Esophagus muscularis mucosa (tissue), 4 donors: ENCODE measurements at regions of chr7 and their contacts with region 1.

Region 1: GRCh38 chr7:66844552-66845378 is 76.3 kb upstream of the TMEM248 start:
- DNase-seq: peak; percentile 99
- H3K4me3 ChIP-seq: peak overlapping the region; percentile 64 to 77 (median 68)
- H3K27ac ChIP-seq: peak overlapping the region; percentile 85 to 91 (median 90)
- H3K4me1 ChIP-seq: peaks cover 12 to 23% (median 18%) of the 10 kb centered on the region in 4 donors
- H3K27me3 ChIP-seq: no peaks in the 10 kb centered on the region
- CTCF ChIP-seq: peak in 1 of 3 experiments; percentile 41
- EP300 ChIP-seq: peak; percentile 3
- POLR2A ChIP-seq: peak; percentile 71

Region 2: DNA sequence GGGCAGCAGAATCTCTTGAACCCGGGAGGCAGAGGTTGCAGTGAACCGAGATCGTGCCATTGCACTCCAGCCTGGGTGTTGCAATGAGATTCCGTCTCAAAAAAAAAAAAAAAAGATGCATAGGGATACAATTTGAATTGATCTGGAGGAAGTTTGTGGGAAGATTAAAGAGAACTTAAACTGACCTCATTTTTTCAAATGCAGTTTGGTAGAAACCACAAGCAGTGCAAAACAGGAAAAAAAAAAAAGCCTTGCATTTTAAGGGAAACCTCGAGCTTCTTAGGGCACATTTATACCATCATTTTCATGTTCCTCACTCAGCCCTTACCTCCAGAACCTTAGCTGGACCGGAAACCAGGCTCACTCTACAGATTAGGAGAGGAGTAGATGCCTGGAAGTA is 213.3 kb before region 1 on chr7:
- intact Hi-C with region 1: no loop called
- DNase-seq: no peak
- H3K4me3 ChIP-seq: no peak overlapping the region
- H3K27ac ChIP-seq: peak overlapping the region in 1 of 4 donors; percentile 1
- H3K4me1 ChIP-seq: peaks cover 11 to 54% (median 49%) of the 10 kb centered on the region in 4 donors
- H3K27me3 ChIP-seq: no peaks in the 10 kb centered on the region
- CTCF ChIP-seq: no peak
- EP300 ChIP-seq: no peak
- POLR2A ChIP-seq: no peak

Region 3: GRCh38 chr7:66920769-66921395 is 76.1 kb after region 1 on chr7 and contains the start of gene TMEM248:
- intact Hi-C with region 1: loop called (anchors 10 kb)
- DNase-seq: peak; percentile 96
- H3K4me3 ChIP-seq: peak within 1 kb of the TSS; percentile 88 to 98 (median 96)
- H3K27ac ChIP-seq: peak within 1 kb of the TSS; percentile 76 to 90 (median 84)
- H3K4me1 ChIP-seq: peaks cover 30 to 52% (median 45%) of the 10 kb centered on the region in 4 donors
- H3K27me3 ChIP-seq: no peaks in the 10 kb centered on the region
- CTCF ChIP-seq: no peak
- EP300 ChIP-seq: no peak
- POLR2A ChIP-seq: peak; percentile 14
- total RNA-seq, gene TMEM248: 87.6 to 113 (median 99.7) TPM

Region 4: DNA sequence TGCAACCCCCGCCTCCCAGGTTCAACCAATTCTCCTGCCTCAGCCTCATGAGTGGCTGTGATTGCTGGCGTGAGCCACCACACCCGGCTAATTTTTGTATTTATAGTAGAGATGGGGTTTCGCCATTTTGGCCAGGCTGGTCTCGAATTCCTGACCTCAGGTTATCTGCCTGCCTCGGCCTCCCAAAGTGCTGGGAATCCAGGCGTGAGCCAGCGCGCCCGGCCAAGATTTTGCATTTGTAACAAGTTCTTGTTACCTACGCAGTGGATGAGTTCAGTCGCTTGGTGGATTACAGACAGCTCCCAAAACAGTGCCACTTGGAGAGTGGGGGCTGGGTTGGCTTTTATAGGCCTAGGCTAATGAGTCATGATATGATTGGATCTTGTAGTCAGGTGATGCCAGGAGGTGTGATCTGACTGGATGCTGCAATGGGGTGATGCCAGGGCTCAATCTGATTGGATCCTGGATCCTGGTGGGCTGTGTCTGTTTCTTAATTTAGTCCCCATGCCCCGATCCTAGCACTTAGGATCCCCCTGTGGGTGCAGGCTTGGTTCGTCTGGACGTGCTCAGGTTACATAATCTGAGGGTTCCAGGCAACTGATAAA is 130.3 kb after region 1 on chr7:
- intact Hi-C with region 1: loop called (anchors 10 kb)
- DNase-seq: no peak
- H3K4me3 ChIP-seq: no peak overlapping the region
- H3K27ac ChIP-seq: no peak overlapping the region
- H3K4me1 ChIP-seq: no peaks in the 10 kb centered on the region
- H3K27me3 ChIP-seq: no peaks in the 10 kb centered on the region
- CTCF ChIP-seq: no peak
- EP300 ChIP-seq: no peak
- POLR2A ChIP-seq: no peak